H1 (cell line): ENCODE measurements at regions of chr10 and their contacts with region 1.

Region 1: DNA sequence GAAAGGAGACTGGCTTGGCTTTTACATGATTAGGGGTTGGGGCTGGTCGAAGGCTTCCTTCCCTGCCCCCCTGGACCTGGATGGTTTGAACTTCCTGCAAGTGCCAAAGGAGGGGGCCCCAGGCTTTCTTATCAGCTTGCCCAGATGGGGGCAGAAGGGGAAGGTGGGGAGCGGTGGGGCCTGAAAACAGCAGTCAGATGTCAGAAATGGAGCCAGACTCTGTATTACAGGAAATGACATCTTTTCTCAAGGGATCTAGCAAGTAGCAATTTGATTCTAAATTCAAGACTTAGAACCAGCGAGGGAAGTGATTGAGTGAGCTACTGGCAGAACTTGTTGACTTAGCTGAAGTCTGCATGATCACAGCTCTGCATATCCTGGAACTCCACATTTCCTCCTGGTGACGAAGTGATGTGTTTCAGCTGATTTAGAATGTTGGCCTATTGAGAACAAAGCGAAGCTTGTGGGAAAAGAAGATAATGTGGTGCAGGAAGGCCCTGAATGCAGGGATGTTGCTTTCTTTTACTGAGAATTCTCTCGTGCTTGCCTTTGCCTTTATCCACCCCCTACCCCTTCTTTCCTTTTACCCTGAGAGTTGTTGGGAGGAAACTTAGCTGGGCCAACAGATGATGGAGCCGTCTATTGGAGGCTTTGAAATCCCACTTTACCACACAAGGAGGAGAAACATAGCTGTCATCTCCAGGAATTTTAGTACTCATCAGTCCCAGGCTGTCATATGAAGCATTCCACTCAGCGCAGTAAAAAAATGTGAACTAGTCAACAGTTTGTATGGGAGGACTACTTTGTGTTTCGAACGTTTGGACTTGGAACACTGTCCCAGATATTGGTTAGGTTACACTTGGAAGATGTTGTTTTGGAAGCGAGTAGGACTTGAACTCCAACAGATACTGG is 43.2 kb downstream of the CCNY start:
- DNase-seq: peak in 1 of 2 experiments; percentile 55
- H3K4me3 ChIP-seq: no peak overlapping the region
- H3K27ac ChIP-seq: no peak overlapping the region
- H3K4me1 ChIP-seq: peaks cover 4 to 10% (median 6%) of the 10 kb centered on the region in 4 experiments
- H3K27me3 ChIP-seq: no peaks in the 10 kb centered on the region
- CTCF ChIP-seq: peak in 2 of 3 experiments; percentile 34 to 59; a peak in 3 of 4 replicates
- EP300 ChIP-seq: no peak
- POLR2A ChIP-seq: no peak
- RAD21 ChIP-seq: peak; percentile 56 to 70

Region 2: DNA sequence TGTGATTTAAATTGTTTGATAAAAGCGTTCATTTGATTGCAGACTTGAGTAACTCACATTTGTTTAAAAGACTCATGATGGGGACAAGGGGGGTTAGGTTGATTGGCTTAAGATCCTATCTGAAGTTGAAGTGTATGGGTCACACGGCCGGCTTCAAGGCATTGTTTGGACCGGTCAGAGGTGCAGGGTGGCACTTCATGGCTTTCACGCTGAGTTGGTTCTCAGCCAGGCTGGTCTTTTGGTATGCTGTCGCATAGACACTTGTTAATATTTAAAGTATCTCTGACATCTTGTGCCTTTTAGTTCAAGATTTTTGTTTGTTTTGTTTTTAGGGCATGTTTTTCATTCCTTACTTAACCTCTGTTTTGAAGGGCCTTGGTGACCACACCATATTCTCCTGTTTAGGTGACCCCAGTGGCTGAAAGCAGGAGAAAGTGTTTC is 14.9 kb after region 1 on chr10:
- CTCF ChIA-PET with region 1: interaction called, 5 read pairs
- POLR2A ChIA-PET with region 1: interaction called, 11 read pairs
- DNase-seq: no peak
- H3K4me3 ChIP-seq: peak overlapping the region in 1 of 4 experiments; percentile 8; a peak in 2 of 8 replicates
- H3K27ac ChIP-seq: peak overlapping the region; percentile 9; the same call in 1 of the 2 replicates
- H3K4me1 ChIP-seq: peaks cover 22 to 48% (median 33%) of the 10 kb centered on the region in 4 experiments
- H3K27me3 ChIP-seq: no peaks in the 10 kb centered on the region
- CTCF ChIP-seq: no peak
- EP300 ChIP-seq: no peak
- POLR2A ChIP-seq: no peak
- RAD21 ChIP-seq: no peak

Region 3: DNA sequence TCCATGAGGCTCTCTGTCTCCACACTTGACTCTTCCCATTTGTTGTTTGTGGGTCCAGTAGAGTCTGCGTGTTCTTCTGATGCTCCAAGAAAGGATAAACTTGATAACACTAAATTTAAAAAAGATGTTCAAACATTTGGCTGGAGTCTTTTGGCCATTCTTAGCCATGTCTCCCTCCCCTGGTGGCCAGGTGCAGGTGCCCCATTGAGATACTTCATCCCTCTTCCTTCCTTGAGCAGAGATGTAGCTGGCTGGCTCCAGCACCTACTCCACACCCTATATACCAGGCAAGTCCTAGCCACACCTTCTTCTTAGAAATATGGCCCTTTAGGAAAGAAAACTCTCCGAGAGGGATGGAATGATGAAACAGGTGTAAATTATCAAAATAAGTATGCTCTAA is 122.4 kb after region 1 on chr10:
- CTCF ChIA-PET with region 1: interaction called, 11 read pairs
- POLR2A ChIA-PET with region 1: no interaction called
- DNase-seq: no peak
- H3K4me3 ChIP-seq: no peak overlapping the region
- H3K27ac ChIP-seq: no peak overlapping the region
- H3K4me1 ChIP-seq: peaks cover 0 to 12% (median 2%) of the 10 kb centered on the region in 4 experiments; a peak in 2 of 7 replicates
- H3K27me3 ChIP-seq: no peaks in the 10 kb centered on the region
- CTCF ChIP-seq: peak; percentile 24 to 60 (median 54)
- EP300 ChIP-seq: no peak
- POLR2A ChIP-seq: no peak
- RAD21 ChIP-seq: peak; percentile 44 to 55; a peak in 3 of 4 replicates